ENCODE measurements at regions of chr2 and their contacts with region 1.

Region 1: GRCh38 chr2:75403991-75404428 is 156.7 kb downstream of the EVA1A start:
- DNase-seq: no peak
- ATAC-seq: peak; percentile 64
- H3K4me3 ChIP-seq: no peak overlapping the region
- H3K27ac ChIP-seq: no peak overlapping the region
- H3K4me1 ChIP-seq: no peaks in the 10 kb centered on the region
- H3K27me3 ChIP-seq: no peaks in the 10 kb centered on the region
- CTCF ChIP-seq: peak; percentile 54 to 81 (median 71)
- POLR2A ChIP-seq: no peak

Region 2: GRCh38 chr2:75053484-75054112 is 350.4 kb before region 1 on chr2:
- intact Hi-C with region 1: loop called (anchors 10 kb)
- DNase-seq: peak; percentile 27 to 50 (median 34)
- ATAC-seq: peak; percentile 74
- H3K4me3 ChIP-seq: no peak overlapping the region
- H3K27ac ChIP-seq: no peak overlapping the region
- H3K4me1 ChIP-seq: no peaks in the 10 kb centered on the region
- H3K27me3 ChIP-seq: no peaks in the 10 kb centered on the region
- CTCF ChIP-seq: peak; percentile 18 to 62 (median 50)
- POLR2A ChIP-seq: no peak